ENCODE measurements at regions of chr9 and their contacts with region 1.

Region 1: GRCh38 chr9:85163415-85163814 is 493.9 kb downstream of the NTRK2 start:
- DNase-seq: no peak
- ATAC-seq: no peak
- H3K4me3 ChIP-seq: no peak overlapping the region
- H3K4me3 Mint-ChIP-seq: no peak overlapping the region
- H3K27ac ChIP-seq: no peak overlapping the region
- H3K27ac Mint-ChIP-seq: no peak overlapping the region
- H3K4me1 ChIP-seq: no peaks in the 10 kb centered on the region
- H3K4me1 Mint-ChIP-seq: no peaks in the 10 kb centered on the region
- H3K27me3 ChIP-seq: no peaks in the 10 kb centered on the region
- H3K27me3 Mint-ChIP-seq: peaks cover 0 to 9% of the 10 kb centered on the region in 2 donors

Region 2: DNA sequence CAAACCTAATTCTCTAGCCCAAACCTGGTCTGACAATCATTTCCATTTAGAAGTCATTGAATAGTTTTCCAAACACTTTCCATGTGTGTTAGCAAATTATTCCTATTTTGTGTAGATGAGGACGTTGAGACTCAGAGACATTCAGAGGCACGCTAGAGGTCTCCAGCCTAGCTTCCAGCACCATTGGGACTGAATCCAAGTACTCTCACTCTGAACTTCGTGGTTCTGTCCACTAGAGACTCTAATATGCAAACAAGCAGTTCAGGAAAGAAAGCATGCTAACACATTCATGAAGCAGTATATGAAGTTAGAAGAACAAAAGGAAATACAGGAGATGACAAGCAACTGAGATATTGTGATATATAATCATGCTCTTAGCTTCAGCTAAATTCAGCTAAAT is 139.0 kb before region 1 on chr9:
- CTCF ChIA-PET with region 1: no interaction called
- POLR2A ChIA-PET with region 1: no interaction called
- DNase-seq: no peak
- ATAC-seq: no peak
- H3K4me3 ChIP-seq: no peak overlapping the region
- H3K4me3 Mint-ChIP-seq: no peak overlapping the region
- H3K27ac ChIP-seq: no peak overlapping the region
- H3K27ac Mint-ChIP-seq: no peak overlapping the region
- H3K4me1 ChIP-seq: no peaks in the 10 kb centered on the region
- H3K4me1 Mint-ChIP-seq: no peaks in the 10 kb centered on the region
- H3K27me3 ChIP-seq: peaks cover 0 to 2% of the 10 kb centered on the region in 2 experiments
- H3K27me3 Mint-ChIP-seq: peaks cover 0 to 5% of the 10 kb centered on the region in 2 donors

Region 3: DNA sequence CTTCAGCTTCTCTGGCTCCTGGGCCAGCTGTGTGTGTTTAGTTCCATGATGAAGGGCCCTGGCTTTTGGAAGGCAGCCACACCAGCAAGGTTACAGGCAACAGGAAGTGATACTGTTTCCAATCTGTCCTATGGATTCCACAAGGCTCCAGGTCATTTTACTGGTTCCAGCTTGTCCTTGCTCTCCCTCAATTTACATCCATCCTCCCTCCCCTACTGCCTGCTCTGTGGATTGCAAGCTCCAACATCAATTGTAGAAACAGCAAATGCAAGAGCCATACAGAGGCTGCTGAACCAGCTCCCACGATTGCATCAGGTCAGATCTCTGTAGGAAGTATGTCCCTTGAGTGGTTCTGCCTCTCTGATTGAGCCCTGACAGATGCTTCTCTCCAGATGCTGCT is 84.1 kb before region 1 on chr9:
- CTCF ChIA-PET with region 1: no interaction called
- POLR2A ChIA-PET with region 1: no interaction called
- DNase-seq: no peak
- ATAC-seq: no peak
- H3K4me3 ChIP-seq: no peak overlapping the region
- H3K4me3 Mint-ChIP-seq: no peak overlapping the region
- H3K27ac ChIP-seq: no peak overlapping the region
- H3K27ac Mint-ChIP-seq: no peak overlapping the region
- H3K4me1 ChIP-seq: no peaks in the 10 kb centered on the region
- H3K4me1 Mint-ChIP-seq: no peaks in the 10 kb centered on the region
- H3K27me3 ChIP-seq: peaks cover 0 to 9% of the 10 kb centered on the region in 2 experiments
- H3K27me3 Mint-ChIP-seq: peaks cover 4 to 11% of the 10 kb centered on the region in 2 donors

Region 4: DNA sequence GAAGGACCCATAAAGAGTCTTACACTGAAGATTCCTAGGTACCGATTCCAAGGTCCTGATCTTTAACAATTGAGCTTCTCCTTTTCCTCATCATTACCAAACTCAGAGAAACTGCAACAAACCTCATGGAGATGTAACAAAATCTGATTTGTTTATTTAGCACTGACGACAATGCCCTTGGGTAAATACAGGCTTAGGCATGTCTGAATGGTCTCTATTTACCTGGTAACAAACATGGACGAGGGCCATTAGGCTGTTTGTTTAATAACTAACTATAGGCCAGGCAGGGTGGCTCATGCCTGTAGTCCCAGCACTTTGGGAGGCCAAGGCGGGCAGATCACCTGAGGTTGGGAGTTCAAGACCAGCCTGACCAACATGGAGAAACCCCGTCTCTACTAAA is 245.1 kb after region 1 on chr9:
- CTCF ChIA-PET with region 1: no interaction called
- POLR2A ChIA-PET with region 1: interaction called in 1 of 2 experiments, 13 read pairs
- DNase-seq: no peak
- ATAC-seq: no peak
- H3K4me3 ChIP-seq: no peak overlapping the region
- H3K4me3 Mint-ChIP-seq: no peak overlapping the region
- H3K27ac ChIP-seq: no peak overlapping the region
- H3K27ac Mint-ChIP-seq: no peak overlapping the region
- H3K4me1 ChIP-seq: no peaks in the 10 kb centered on the region
- H3K4me1 Mint-ChIP-seq: no peaks in the 10 kb centered on the region
- H3K27me3 ChIP-seq: peaks cover 0 to 2% of the 10 kb centered on the region in 2 experiments
- H3K27me3 Mint-ChIP-seq: peaks cover 5 to 7% of the 10 kb centered on the region in 2 donors

Measured in T-cell (primary cell).